ENCODE measurements at regions of chr16 and their contacts with region 1.

Region 1: DNA sequence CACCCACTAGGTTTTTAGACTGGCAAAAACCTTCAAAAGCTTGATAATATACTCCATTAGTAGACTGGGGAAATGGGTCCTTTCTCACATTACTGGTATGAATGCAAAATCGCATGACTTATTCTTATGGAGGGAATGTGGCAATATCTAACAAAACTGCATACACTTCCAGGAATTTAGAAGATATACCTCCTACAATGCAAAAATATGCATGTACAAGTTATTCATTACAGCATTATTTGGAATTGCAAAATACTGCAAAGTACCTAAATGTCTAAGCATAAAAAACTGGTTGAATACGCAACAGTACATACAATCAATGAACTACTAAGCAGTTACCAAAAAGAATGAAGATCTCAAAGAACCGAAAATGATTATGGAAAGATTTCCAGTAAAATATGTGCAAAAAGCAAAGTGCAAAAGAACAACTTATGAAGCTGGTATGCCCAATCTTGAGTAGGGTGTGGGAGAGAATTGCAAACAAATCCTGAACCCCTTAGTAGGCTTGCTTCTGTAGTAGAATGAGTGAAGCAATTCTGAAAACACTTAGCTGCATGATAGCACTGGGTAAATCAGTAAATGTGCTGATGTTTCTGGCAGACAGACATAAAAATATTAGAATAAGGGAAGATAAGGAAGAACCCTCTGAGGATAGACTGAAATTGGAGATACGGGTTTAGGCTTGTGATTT is 180.1 kb downstream of the PARN start:
- DNase-seq: no peak
- H3K4me3 ChIP-seq: no peak overlapping the region
- H3K4me3 Mint-ChIP-seq: no peak overlapping the region
- H3K27ac ChIP-seq: no peak overlapping the region
- H3K27ac Mint-ChIP-seq: no peak overlapping the region
- H3K4me1 ChIP-seq: peaks cover 3 to 12% of the 10 kb centered on the region in 2 donors
- H3K4me1 Mint-ChIP-seq: peaks cover 12% of the 10 kb centered on the region
- H3K27me3 ChIP-seq: no peaks in the 10 kb centered on the region
- H3K27me3 Mint-ChIP-seq: no peaks in the 10 kb centered on the region
- CTCF ChIP-seq: no peak

Region 2: GRCh38 chr16:13645591-13646245 is 804.2 kb before region 1 on chr16:
- intact Hi-C with region 1: no loop called
- DNase-seq: no peak
- H3K4me3 ChIP-seq: no peak overlapping the region
- H3K4me3 Mint-ChIP-seq: no peak overlapping the region
- H3K27ac ChIP-seq: no peak overlapping the region
- H3K27ac Mint-ChIP-seq: no peak overlapping the region
- H3K4me1 ChIP-seq: no peaks in the 10 kb centered on the region
- H3K4me1 Mint-ChIP-seq: no peaks in the 10 kb centered on the region
- H3K27me3 ChIP-seq: no peaks in the 10 kb centered on the region
- H3K27me3 Mint-ChIP-seq: peaks cover 0 to 4% (median 1%) of the 10 kb centered on the region in 3 donors
- CTCF ChIP-seq: no peak

Region 3: GRCh38 chr16:14240219-14240843 is 209.6 kb before region 1 on chr16:
- intact Hi-C with region 1: no loop called
- DNase-seq: no peak
- H3K4me3 ChIP-seq: no peak overlapping the region
- H3K4me3 Mint-ChIP-seq: no peak overlapping the region
- H3K27ac ChIP-seq: no peak overlapping the region
- H3K27ac Mint-ChIP-seq: no peak overlapping the region
- H3K4me1 ChIP-seq: no peaks in the 10 kb centered on the region
- H3K4me1 Mint-ChIP-seq: no peaks in the 10 kb centered on the region
- H3K27me3 ChIP-seq: no peaks in the 10 kb centered on the region
- H3K27me3 Mint-ChIP-seq: no peaks in the 10 kb centered on the region
- CTCF ChIP-seq: no peak

Region 4: GRCh38 chr16:14409563-14409962 is 40.4 kb before region 1 on chr16:
- intact Hi-C with region 1: no loop called
- DNase-seq: no peak
- H3K4me3 ChIP-seq: no peak overlapping the region
- H3K4me3 Mint-ChIP-seq: no peak overlapping the region
- H3K27ac ChIP-seq: no peak overlapping the region
- H3K27ac Mint-ChIP-seq: no peak overlapping the region
- H3K4me1 ChIP-seq: no peaks in the 10 kb centered on the region
- H3K4me1 Mint-ChIP-seq: peaks cover 3% of the 10 kb centered on the region
- H3K27me3 ChIP-seq: no peaks in the 10 kb centered on the region
- H3K27me3 Mint-ChIP-seq: peaks cover 0 to 8% (median 2%) of the 10 kb centered on the region in 3 donors
- CTCF ChIP-seq: no peak

Region 5: GRCh38 chr16:14497245-14498082 is 47.5 kb after region 1 on chr16:
- intact Hi-C with region 1: loop called in 1 of 2 experiments (anchors 5 kb)
- DNase-seq: no peak
- H3K4me3 ChIP-seq: no peak overlapping the region
- H3K4me3 Mint-ChIP-seq: no peak overlapping the region
- H3K27ac ChIP-seq: no peak overlapping the region
- H3K27ac Mint-ChIP-seq: no peak overlapping the region
- H3K4me1 ChIP-seq: no peaks in the 10 kb centered on the region
- H3K4me1 Mint-ChIP-seq: peaks cover 9% of the 10 kb centered on the region
- H3K27me3 ChIP-seq: no peaks in the 10 kb centered on the region
- H3K27me3 Mint-ChIP-seq: peaks cover 0 to 1% (median 0%) of the 10 kb centered on the region in 3 donors
- CTCF ChIP-seq: no peak

Region 6: DNA sequence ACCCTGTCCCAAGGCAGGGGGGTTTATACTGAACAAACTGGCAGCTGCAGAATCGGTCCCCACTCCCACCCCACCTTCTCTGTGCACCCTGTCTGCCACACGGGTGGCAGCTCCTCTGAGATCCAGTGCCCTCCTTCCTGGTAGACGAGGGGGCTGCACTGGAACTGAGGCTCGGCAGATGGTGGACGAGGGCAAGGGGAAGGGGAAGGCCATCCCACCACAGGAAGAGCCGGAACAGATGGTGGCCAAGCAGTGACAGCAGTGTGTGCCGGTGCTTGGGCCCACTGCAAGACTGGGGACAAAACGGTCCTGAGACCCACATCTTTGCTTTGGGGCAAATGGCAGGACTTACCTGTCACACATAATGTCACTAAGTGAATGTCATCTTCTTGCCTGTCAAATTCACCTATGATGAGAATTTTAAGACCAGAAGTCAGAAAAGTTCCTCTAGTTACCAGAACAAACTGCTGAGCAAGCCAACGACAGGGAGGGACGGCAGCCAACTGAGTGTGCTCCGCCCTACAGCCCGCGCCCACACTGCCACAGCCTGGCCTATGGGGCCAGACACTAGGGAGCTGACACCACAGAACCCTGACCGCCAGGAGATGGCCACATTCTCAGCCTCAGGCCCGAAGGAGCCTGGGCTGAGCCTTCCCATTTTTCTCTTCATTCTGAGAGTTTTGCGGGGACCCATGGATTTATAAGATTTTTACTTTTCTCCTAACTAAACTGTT is 591.5 kb after region 1 on chr16:
- intact Hi-C with region 1: no loop called
- DNase-seq: peak in 2 of 3 donors; percentile 10 to 14
- H3K4me3 ChIP-seq: no peak overlapping the region
- H3K4me3 Mint-ChIP-seq: no peak overlapping the region
- H3K27ac ChIP-seq: peak overlapping the region; percentile 17 to 25
- H3K27ac Mint-ChIP-seq: peak overlapping the region; percentile 54 to 71 (median 65)
- H3K4me1 ChIP-seq: peaks cover 6% of the 10 kb centered on the region in 2 donors
- H3K4me1 Mint-ChIP-seq: peaks cover 9% of the 10 kb centered on the region
- H3K27me3 ChIP-seq: no peaks in the 10 kb centered on the region
- H3K27me3 Mint-ChIP-seq: no peaks in the 10 kb centered on the region
- CTCF ChIP-seq: no peak

Measured in CD14-positive monocyte (primary cell).